Panc1 (cell line): ENCODE measurements at regions of chr1 and their contacts with region 1.

Region 1: DNA sequence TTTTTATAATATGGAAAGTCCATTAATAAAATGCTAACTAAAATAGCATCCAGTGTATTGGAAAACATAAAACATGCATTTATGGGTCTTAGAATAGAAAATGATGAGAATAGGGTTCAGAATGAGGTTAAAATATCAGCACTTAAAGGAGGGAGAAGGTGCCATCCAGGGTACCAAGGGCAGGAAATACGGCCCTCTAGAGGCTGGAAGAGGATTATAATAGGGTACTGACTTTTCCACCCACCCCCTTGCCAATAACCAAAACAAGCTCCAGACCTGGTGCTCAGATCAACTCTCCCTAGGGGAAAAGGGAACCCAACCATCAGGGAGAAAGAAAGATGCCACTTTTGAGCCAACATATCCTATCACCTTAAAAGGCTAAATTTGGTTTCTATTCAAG is 26.7 kb downstream of the ASTN1 start:
- DNase-seq: no peak
- ATAC-seq: no peak
- H3K4me3 ChIP-seq: no peak overlapping the region
- H3K27ac ChIP-seq: no peak overlapping the region
- H3K4me1 ChIP-seq: no peaks in the 10 kb centered on the region
- H3K27me3 ChIP-seq: no peaks in the 10 kb centered on the region
- CTCF ChIP-seq: no peak

Region 2: GRCh38 chr1:176989023-176989422 is 148.8 kb before region 1 on chr1:
- CTCF ChIA-PET with region 1: no interaction called
- POLR2A ChIA-PET with region 1: interaction called, 13 read pairs
- in situ Hi-C with region 1: no loop called
- intact Hi-C with region 1: no loop called
- DNase-seq: no peak
- ATAC-seq: no peak
- H3K4me3 ChIP-seq: no peak overlapping the region
- H3K27ac ChIP-seq: no peak overlapping the region
- H3K4me1 ChIP-seq: no peaks in the 10 kb centered on the region
- H3K27me3 ChIP-seq: no peaks in the 10 kb centered on the region
- CTCF ChIP-seq: no peak